Dorsolateral prefrontal cortex (tissue), 120 donors: ENCODE measurements at regions of chr1 and their contacts with region 1.

Region 1: DNA sequence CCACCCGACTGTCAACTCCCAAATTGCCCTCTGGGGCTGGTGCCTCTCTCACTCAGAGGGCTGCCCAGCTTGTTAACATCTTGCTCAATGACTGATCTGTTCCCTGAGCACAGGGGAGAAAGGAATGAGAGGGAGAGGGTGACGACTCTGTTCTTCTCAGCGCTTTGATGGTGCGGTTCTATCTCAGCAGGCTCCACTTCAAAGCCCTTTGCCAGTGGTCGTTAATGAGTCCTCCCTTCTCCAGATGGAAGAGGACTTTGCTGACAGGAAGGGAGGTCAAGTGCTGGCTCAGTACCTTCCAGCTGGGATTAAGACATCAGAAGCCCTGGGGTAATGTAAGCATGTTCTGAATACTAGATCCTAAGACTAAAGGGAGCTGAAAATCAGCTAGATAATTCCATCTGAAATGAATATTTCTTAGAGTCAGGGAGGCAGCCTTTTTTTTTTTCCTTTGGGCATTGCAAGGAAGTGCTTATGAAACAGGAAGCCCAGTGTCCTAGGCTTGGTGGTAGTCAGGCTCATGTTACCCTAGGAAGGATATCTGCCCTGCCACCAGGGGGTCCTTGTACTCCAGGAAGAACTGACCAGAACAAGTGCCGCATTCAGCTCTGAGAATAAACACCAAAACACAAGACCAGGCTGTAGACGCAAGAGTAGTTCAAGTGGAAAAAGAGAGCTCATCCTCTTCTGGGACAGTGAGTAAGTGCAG is 4.7 kb downstream of the FMOD start:
- DNase-seq: no peak
- H3K4me3 ChIP-seq: no peak overlapping the region
- H3K27ac ChIP-seq: peak overlapping the region in 4 of 59 donors; percentile 23 to 48 (median 40)
- H3K27me3 ChIP-seq: no peaks in the 10 kb centered on the region
- CTCF ChIP-seq: peak in 2 of 56 donors; percentile 7 to 15

Region 2: GRCh38 chr1:203135636-203136305 is 210.4 kb before region 1 on chr1:
- intact Hi-C with region 1: no loop called
- DNase-seq: peak in 2 of 10 donors; percentile 20 to 40
- H3K4me3 ChIP-seq: peak overlapping the region in 10 of 59 donors; percentile 0 to 43 (median 13)
- H3K27ac ChIP-seq: peak overlapping the region in 55 of 59 donors; percentile 6 to 100 (median 83)
- H3K27me3 ChIP-seq: no peaks in the 10 kb centered on the region
- CTCF ChIP-seq: no peak

Region 3: GRCh38 chr1:203267347-203267846 is 78.8 kb before region 1 on chr1:
- intact Hi-C with region 1: no loop called
- DNase-seq: peak in 9 of 10 donors; percentile 60 to 83 (median 82)
- H3K4me3 ChIP-seq: peak overlapping the region; percentile 35 to 82 (median 60)
- H3K27ac ChIP-seq: peak overlapping the region in 57 of 59 donors; percentile 13 to 93 (median 77)
- H3K27me3 ChIP-seq: no peaks in the 10 kb centered on the region
- CTCF ChIP-seq: peak; percentile 86 to 99 (median 95)

Region 4: DNA sequence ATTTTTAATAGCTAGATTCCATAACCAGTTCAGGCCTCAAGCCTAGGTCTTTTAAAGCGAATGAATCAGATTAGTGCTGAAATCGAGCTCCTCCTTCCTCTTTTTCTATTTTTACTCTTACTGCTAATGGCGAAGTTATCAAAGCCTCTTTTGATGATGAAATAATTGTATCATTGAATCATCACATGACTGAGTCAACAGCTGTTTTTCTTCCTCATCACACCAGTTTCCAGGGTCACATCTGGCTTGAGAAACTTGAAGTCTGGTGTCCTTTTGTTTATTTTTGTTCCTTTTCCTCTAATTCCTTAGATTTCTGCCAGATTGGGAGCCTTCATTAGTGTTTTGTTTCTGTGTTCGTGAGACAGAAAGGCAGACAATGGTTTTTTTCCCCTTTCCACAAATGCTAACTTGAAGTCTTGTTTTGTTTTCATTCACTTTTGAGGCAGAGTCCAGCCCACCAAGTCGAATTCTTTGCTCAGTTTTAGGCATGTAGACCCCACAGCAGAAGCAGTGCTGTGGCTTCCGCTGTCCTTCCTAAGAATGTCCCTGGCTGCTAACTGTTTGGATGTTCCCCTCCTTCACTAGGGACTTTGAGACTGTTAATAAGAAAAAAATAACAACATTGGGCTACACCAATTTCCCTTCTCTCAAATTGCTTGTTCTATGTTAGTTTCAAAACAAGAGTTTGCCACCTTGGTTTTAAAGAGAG is 56.6 kb after region 1 on chr1:
- intact Hi-C with region 1: loop called (anchors 5 kb)
- DNase-seq: no peak
- H3K4me3 ChIP-seq: peak overlapping the region in 2 of 59 donors; percentile 6 to 24
- H3K27ac ChIP-seq: peak overlapping the region; percentile 28 to 93 (median 82)
- H3K27me3 ChIP-seq: no peaks in the 10 kb centered on the region
- CTCF ChIP-seq: peak in 4 of 56 donors; percentile 13 to 29 (median 14)